Dendritic cell treated with granulocyte-macrophage colony-stimulating factor and Interleukin-4, amounts not matched to agents 40 ng/mL and 50 ng/mL, for 4 days (primary cell): ENCODE measurements at regions of chr12 and their contacts with region 1.

Region 1: DNA sequence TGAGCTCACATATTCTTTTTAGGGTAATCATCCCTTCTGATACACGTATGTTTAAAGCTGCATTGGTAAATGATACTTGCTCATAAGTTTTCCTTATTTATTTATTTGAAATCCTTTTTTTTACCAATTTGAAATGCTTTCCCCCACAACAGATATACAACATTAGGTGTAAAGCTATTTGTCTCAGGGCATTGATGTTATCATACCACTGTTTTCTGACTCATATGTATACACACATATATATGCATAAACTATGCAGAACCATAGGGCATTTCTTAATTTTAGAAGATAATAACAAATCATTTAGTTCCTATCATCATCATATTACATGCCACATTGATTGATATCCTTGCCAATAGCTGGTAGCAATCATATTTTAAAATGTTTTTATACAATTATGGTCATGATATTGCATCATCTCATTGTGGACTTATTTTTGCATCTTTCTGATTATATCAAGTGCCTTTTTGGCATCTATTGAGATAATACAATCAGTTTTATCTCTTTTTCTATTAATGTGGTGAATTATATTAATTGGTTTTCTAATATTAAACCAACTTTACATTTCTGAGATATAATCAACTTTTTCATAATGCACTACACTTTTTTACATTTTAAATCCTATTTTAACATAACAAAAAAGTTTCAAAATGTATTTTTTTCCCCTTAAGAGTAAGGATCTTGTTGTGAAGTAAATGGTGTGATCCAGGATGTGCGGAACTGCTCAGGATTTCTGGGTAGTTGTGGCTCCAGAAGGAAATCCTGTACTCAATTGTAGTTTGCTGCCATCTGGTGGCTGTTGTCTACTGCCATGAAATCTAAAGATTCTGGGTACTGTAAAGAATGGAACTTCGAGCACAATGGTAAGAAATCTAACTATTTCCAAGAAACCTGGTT is 16.7 kb downstream of the OR9K2 start:
- H3K4me3 Mint-ChIP-seq: no peak overlapping the region
- H3K27ac Mint-ChIP-seq: no peak overlapping the region
- H3K4me1 Mint-ChIP-seq: no peaks in the 10 kb centered on the region
- H3K27me3 Mint-ChIP-seq: peaks cover 1% of the 10 kb centered on the region

Region 2: GRCh38 chr12:54759751-54760150 is 383.2 kb before region 1 on chr12:
- intact Hi-C with region 1: loop called (anchors 10 kb)
- H3K4me3 Mint-ChIP-seq: no peak overlapping the region
- H3K27ac Mint-ChIP-seq: no peak overlapping the region
- H3K4me1 Mint-ChIP-seq: no peaks in the 10 kb centered on the region
- H3K27me3 Mint-ChIP-seq: no peaks in the 10 kb centered on the region

Region 3: DNA sequence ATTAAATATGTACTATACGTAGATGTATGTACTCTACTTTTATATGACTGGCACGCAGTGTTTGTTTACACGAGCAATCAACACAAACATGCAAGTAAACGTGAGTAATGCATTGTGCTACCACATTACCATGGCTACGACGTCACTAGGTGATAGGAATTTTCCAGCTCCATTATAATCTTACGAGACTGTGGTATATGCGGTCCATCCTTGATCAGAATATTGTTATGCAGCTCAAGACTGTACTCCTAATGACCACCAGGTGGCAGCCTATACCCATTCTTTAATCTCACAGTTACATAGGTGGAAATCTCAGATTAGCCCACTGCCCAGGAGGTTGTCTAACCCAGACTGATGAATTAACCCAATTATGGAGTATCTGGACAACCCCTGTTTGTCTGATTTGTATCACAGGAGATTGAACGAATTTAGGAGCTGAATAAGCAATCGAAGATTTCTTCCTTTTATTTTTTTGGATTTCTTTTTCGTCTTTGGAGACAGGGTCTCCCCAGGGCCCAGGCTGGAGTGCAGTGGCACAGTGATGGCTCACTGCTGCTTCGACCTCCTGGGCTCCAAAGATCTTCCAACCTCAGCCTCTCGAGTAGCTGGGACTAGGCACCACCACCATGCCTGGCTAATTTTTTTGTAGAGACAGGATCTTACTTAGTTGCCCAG is 149.6 kb before region 1 on chr12:
- intact Hi-C with region 1: loop called (anchors 2 kb)
- H3K4me3 Mint-ChIP-seq: no peak overlapping the region
- H3K27ac Mint-ChIP-seq: no peak overlapping the region
- H3K4me1 Mint-ChIP-seq: peaks cover 12% of the 10 kb centered on the region
- H3K27me3 Mint-ChIP-seq: peaks cover 17% of the 10 kb centered on the region

Region 4: DNA sequence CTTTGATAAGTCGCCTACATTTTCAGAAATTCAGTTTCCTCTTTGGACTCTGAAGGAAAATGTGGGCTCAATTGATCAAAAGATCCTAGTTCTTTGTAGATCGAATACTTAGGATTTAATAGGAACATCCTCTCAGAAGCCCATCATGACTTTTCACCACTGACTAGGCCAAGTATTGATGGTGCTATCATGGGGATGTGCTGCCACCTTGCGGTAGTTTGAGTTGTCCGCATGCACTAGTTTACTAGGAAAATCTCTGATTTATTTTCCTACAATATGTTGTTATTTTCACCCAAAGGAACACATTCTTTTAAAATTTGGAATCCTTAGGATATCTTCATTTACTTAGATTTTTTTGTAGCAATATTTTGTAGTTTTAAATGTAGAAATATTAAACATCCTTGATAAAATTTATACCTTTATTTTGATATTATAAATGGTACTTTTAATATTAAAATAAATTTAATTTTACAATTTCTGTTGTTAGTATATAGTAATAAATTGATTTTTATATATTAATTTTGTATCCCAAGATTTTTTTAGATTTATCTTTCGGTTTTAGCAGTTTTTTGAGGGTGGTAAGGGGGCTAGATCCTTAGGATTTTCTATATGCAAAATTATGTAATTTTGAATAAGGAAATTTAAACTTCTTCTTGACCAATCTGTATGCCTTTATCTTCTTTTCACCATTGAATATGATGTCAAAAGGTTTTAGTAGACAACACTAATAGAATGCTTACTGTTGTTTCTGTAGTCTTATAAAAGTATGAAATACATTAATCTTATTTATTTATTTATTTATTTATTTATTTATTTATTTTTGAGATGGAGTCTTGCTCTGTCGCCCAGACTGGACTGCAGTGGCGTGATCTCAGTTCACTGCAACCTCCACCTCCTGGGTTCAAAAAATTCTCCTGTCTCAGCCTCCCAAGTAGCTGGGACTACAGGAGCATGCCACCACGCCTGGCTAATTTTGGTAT is 69.6 kb before region 1 on chr12:
- intact Hi-C with region 1: no loop called
- H3K4me3 Mint-ChIP-seq: no peak overlapping the region
- H3K27ac Mint-ChIP-seq: no peak overlapping the region
- H3K4me1 Mint-ChIP-seq: no peaks in the 10 kb centered on the region
- H3K27me3 Mint-ChIP-seq: peaks cover 9% of the 10 kb centered on the region